CD4-positive, alpha-beta T cell (primary cell): ENCODE measurements at regions of chr12 and their contacts with region 1.

Region 1: DNA sequence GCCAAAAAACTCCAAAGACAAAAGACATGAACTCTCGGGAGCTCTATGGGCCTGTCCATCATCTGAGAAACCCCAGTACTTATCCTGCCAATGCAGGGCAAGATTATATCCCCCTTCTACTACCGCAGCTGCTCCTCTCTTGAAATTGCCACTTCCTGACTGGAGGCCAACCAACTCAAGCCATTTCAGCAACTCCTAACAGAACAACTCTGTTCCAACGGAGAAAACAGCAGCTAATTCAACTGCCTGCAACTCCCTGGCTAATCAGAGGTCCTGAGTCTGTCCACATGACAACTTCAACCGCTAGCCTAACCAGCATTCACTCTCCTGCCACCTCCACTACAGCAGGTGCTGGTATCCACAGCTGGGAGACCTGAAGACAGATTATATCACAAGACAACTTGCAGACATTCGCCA is 24.1 kb downstream of the CEP83 start:
- DNase-seq: no peak
- ATAC-seq: no peak
- H3K4me3 ChIP-seq: no peak overlapping the region
- H3K4me3 Mint-ChIP-seq: no peak overlapping the region
- H3K27ac ChIP-seq: no peak overlapping the region
- H3K27ac Mint-ChIP-seq: no peak overlapping the region
- H3K4me1 ChIP-seq: no peaks in the 10 kb centered on the region
- H3K4me1 Mint-ChIP-seq: peaks cover 18% of the 10 kb centered on the region
- H3K27me3 ChIP-seq: no peaks in the 10 kb centered on the region
- H3K27me3 Mint-ChIP-seq: no peaks in the 10 kb centered on the region
- CTCF ChIP-seq: no peak

Region 2: GRCh38 chr12:94386422-94386821 is 49.1 kb before region 1 on chr12:
- CTCF ChIA-PET with region 1: interaction called, 3 read pairs
- POLR2A ChIA-PET with region 1: no interaction called
- intact Hi-C with region 1: loop called in 1 of 2 experiments (anchors 2 kb)
- DNase-seq: no peak
- ATAC-seq: no peak
- H3K4me3 ChIP-seq: no peak overlapping the region
- H3K4me3 Mint-ChIP-seq: no peak overlapping the region
- H3K27ac ChIP-seq: no peak overlapping the region
- H3K27ac Mint-ChIP-seq: no peak overlapping the region
- H3K4me1 ChIP-seq: no peaks in the 10 kb centered on the region
- H3K4me1 Mint-ChIP-seq: no peaks in the 10 kb centered on the region
- H3K27me3 ChIP-seq: no peaks in the 10 kb centered on the region
- H3K27me3 Mint-ChIP-seq: no peaks in the 10 kb centered on the region
- CTCF ChIP-seq: no peak

Region 3: GRCh38 chr12:94469522-94469921 is 34.0 kb after region 1 on chr12:
- CTCF ChIA-PET with region 1: no interaction called
- POLR2A ChIA-PET with region 1: no interaction called
- intact Hi-C with region 1: no loop called
- DNase-seq: no peak
- ATAC-seq: no peak
- H3K4me3 ChIP-seq: no peak overlapping the region
- H3K4me3 Mint-ChIP-seq: no peak overlapping the region
- H3K27ac ChIP-seq: no peak overlapping the region
- H3K27ac Mint-ChIP-seq: no peak overlapping the region
- H3K4me1 ChIP-seq: no peaks in the 10 kb centered on the region
- H3K4me1 Mint-ChIP-seq: no peaks in the 10 kb centered on the region
- H3K27me3 ChIP-seq: no peaks in the 10 kb centered on the region
- H3K27me3 Mint-ChIP-seq: no peaks in the 10 kb centered on the region
- CTCF ChIP-seq: no peak